Activated CD4-positive, alpha-beta memory T cell treated with anti-CD3 and anti-CD28 coated beads, Interleukin-2, amount 10 ng/mL, durations not matched to agents 7 days and 5 days (primary cell): ENCODE measurements at regions of chr2 and their contacts with region 1.

Region 1: GRCh38 chr2:62456721-62457539 is 49.1 kb downstream of the TMEM17 start:
- DNase-seq: peak; percentile 67
- H3K4me3 Mint-ChIP-seq: peak overlapping the region; percentile 41
- H3K27ac Mint-ChIP-seq: no peak overlapping the region
- H3K4me1 Mint-ChIP-seq: peaks cover 3% of the 10 kb centered on the region
- H3K27me3 Mint-ChIP-seq: no peaks in the 10 kb centered on the region

Region 2: GRCh38 chr2:62248221-62248620 is 208.7 kb before region 1 on chr2:
- CTCF ChIA-PET with region 1: no interaction called
- POLR2A ChIA-PET with region 1: no interaction called
- DNase-seq: no peak
- H3K4me3 Mint-ChIP-seq: no peak overlapping the region
- H3K27ac Mint-ChIP-seq: no peak overlapping the region
- H3K4me1 Mint-ChIP-seq: no peaks in the 10 kb centered on the region
- H3K27me3 Mint-ChIP-seq: no peaks in the 10 kb centered on the region

Region 3: DNA sequence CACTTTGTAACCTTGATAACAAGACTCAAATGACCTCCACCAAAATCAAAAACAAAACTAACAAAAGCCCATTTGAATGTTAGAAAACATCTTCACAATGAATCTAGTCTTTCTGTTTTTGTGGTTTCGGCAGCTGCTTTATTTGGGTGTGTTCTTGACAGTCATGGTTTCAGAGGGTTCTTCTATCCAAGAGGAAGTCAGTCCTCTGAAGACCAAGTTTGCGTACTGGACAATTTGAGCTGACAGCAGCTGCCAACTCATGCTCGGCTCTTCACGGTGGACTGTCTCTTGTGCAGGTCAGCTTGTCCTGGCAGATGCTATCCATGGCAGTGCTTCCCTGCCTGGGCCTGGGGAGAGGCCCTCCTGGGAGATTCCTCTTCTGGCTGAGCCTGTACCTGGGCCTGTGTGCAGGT is 41.9 kb before region 1 on chr2:
- CTCF ChIA-PET with region 1: no interaction called
- POLR2A ChIA-PET with region 1: no interaction called
- DNase-seq: no peak
- H3K4me3 Mint-ChIP-seq: no peak overlapping the region
- H3K27ac Mint-ChIP-seq: peak overlapping the region; percentile 45
- H3K4me1 Mint-ChIP-seq: peaks cover 14% of the 10 kb centered on the region
- H3K27me3 Mint-ChIP-seq: peaks cover 9% of the 10 kb centered on the region

Region 4: DNA sequence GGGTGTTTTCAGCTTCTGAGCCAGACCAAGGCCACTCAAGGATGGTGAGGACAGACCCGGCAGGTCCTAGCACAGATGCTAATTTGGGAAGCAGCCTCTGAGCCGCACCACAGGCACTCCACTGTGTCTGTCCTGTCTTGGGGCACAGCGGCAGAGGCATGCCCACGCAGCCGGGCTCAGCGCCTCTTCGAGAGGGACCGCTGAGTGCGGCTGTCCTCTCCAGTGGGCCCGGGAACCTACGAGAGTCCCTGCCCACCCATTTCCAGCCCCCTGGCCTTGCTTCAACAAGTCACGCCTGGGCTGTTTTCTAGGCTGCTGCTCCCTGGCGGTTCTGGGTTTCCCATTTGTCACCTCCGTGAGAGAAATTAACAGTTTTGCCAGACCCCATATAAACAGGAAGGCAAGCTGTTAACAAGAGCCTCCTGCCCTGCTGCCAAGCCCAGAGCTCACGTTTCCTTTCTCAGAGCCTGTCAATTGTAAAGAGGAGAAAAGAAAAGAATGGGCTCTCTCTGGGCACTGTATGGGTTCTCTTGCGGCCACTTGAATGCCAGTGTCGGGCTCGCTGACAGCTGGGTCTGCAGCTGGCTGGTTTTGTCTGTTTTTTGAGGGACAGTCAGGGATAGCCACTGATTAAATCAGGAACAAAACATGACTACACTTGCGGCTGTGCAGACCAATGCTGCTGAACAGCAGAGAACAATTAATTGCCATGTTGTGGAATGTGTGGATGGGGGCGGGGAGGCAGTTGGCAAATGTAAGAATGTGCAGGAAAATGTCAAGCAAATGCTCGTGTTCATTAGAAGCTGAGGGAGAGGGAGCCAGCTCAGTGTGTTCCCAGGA is 18.5 kb after region 1 on chr2:
- CTCF ChIA-PET with region 1: interaction called, 11 read pairs
- POLR2A ChIA-PET with region 1: no interaction called
- DNase-seq: no peak
- H3K4me3 Mint-ChIP-seq: no peak overlapping the region
- H3K27ac Mint-ChIP-seq: no peak overlapping the region
- H3K4me1 Mint-ChIP-seq: no peaks in the 10 kb centered on the region
- H3K27me3 Mint-ChIP-seq: peaks cover 10% of the 10 kb centered on the region

Region 5: DNA sequence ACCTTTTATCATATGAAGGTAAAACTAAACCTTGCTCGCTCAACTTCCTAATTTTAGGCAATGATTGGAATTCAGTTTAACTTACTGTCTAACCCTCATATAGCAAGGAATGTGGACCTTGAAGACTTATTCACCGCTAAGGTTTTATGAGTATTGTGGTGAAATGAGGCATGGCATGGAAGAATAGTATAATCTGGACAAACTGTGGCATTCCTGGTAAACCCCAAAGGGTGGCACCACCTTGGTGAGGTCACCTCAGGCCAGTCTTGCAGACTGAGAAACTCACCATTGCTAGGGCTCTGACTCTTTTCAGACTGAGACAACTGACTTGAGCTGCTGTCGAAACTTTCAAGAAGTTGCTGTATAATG is 197.5 kb after region 1 on chr2:
- CTCF ChIA-PET with region 1: no interaction called
- POLR2A ChIA-PET with region 1: no interaction called
- DNase-seq: no peak
- H3K4me3 Mint-ChIP-seq: no peak overlapping the region
- H3K27ac Mint-ChIP-seq: no peak overlapping the region
- H3K4me1 Mint-ChIP-seq: no peaks in the 10 kb centered on the region
- H3K27me3 Mint-ChIP-seq: peaks cover 3% of the 10 kb centered on the region

Region 6: DNA sequence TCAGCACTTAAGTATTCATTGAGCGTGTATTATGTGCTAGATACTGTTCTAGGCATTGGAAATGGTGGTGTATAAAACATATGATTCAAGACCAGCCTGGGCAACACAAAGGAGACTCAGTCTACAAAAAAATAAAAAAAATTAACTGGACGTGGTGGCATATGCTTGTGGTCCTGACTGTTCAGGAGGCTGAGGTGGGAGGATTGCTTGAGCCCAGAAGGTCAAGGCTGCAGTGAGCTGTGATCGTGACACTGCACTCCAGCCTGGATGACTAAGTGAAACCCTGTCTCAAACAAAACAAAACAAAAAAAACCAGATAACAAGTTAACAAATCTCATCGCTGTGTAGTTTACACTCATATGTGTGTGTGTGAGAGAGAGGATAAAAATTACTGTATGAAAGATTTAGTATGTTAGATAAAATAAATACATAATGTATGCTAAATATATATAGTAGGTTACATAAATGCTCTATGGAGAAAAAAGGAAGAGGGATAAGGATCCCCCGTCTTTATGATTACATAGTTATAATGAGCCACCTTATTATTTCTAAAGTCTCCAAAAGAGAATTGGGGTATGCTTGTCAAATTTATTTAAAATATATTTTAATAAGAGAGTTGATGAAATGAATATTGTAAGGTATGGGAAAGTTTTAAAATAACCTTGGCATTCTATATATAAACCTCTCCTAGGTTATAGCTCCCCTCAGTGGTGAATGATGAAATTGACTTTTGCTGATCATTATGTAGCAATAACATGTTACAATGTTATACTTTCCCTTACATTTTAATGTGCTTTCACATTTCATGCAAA is 317.8 kb after region 1 on chr2:
- CTCF ChIA-PET with region 1: interaction called, 59 read pairs
- POLR2A ChIA-PET with region 1: no interaction called
- DNase-seq: no peak
- H3K4me3 Mint-ChIP-seq: no peak overlapping the region
- H3K27ac Mint-ChIP-seq: no peak overlapping the region
- H3K4me1 Mint-ChIP-seq: peaks cover 3% of the 10 kb centered on the region
- H3K27me3 Mint-ChIP-seq: no peaks in the 10 kb centered on the region